A549 (cell line): ENCODE measurements at regions of chr16 and their contacts with region 1.

Region 1: GRCh38 chr16:74216319-74216718 is 80.3 kb upstream of the PSMD7 start:
- DNase-seq: no peak
- ATAC-seq: no peak
- H3K4me3 ChIP-seq: no peak overlapping the region
- H3K27ac ChIP-seq: no peak overlapping the region
- H3K4me1 ChIP-seq: no peaks in the 10 kb centered on the region
- CTCF ChIP-seq: no peak
- EP300 ChIP-seq: no peak
- POLR2A ChIP-seq: no peak
- RAD21 ChIP-seq: no peak

Region 2: DNA sequence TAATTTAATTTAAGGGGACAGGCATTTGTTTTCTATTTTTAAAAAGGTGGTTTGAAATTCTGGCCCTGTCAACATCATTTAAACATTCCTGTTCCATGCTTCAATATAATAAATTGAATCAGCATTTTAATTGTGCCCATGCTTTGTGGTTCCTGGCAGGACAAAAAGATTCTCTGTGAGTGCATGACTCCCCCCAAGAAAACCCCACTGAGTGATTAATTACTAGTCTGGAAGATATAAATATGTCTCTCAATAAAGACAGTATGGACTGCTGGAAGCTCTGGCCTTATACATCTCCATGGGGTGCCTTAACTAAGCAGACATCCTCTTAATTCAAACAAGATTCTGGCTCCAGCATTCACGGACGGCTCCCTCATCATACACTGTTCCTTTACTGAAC is 14.7 kb before region 1 on chr16:
- CTCF ChIA-PET with region 1: no interaction called
- POLR2A ChIA-PET with region 1: no interaction called
- DNase-seq: no peak
- ATAC-seq: no peak
- H3K4me3 ChIP-seq: no peak overlapping the region
- H3K27ac ChIP-seq: no peak overlapping the region
- H3K4me1 ChIP-seq: no peaks in the 10 kb centered on the region
- CTCF ChIP-seq: no peak
- EP300 ChIP-seq: no peak
- POLR2A ChIP-seq: no peak
- RAD21 ChIP-seq: no peak

Region 3: GRCh38 chr16:74226338-74226954 is 10.1 kb after region 1 on chr16:
- CTCF ChIA-PET with region 1: interaction called, 15 read pairs
- POLR2A ChIA-PET with region 1: no interaction called
- DNase-seq: peak in 1 of 2 experiments; percentile 10
- ATAC-seq: peak in 1 of 2 experiments; percentile 45; a peak in 2 of 6 replicates
- H3K4me3 ChIP-seq: no peak overlapping the region
- H3K27ac ChIP-seq: no peak overlapping the region
- H3K4me1 ChIP-seq: no peaks in the 10 kb centered on the region
- CTCF ChIP-seq: peak; percentile 48
- EP300 ChIP-seq: no peak
- POLR2A ChIP-seq: no peak
- RAD21 ChIP-seq: peak; percentile 42 to 48; a peak in 4 of 5 replicates

Region 4: DNA sequence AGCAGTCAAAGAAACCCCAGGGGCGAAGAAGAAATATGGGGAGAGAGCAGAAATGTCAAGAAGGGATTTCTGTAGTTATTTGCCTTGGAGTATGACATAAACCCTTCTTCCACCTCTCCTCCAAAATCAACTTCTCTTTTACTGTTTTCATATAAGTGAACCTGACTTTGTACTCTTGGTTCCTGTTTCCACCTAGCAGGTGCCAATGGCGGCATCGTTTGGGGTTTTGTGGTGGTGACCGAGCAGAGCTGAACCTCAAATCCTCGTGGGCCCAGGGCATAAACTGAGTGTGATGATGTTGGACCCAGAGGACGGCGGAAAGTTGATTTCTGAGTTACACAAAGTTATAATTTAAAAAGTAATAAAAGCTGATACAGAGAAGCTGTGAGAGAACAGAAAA is 40.7 kb after region 1 on chr16:
- CTCF ChIA-PET with region 1: no interaction called
- POLR2A ChIA-PET with region 1: no interaction called
- DNase-seq: no peak
- ATAC-seq: no peak
- H3K4me3 ChIP-seq: no peak overlapping the region
- H3K27ac ChIP-seq: no peak overlapping the region
- H3K4me1 ChIP-seq: no peaks in the 10 kb centered on the region
- CTCF ChIP-seq: no peak
- EP300 ChIP-seq: no peak
- POLR2A ChIP-seq: no peak
- RAD21 ChIP-seq: no peak